Astrocyte of the cerebellum (primary cell): ENCODE measurements at regions of chr4 and their contacts with region 1.

Region 1: GRCh38 chr4:150297861-150298474 is 219.7 kb downstream of the DCLK2 start:
- DNase-seq: peak; percentile 70
- H3K4me3 ChIP-seq: no peak overlapping the region
- CTCF ChIP-seq: peak; percentile 62

Region 2: DNA sequence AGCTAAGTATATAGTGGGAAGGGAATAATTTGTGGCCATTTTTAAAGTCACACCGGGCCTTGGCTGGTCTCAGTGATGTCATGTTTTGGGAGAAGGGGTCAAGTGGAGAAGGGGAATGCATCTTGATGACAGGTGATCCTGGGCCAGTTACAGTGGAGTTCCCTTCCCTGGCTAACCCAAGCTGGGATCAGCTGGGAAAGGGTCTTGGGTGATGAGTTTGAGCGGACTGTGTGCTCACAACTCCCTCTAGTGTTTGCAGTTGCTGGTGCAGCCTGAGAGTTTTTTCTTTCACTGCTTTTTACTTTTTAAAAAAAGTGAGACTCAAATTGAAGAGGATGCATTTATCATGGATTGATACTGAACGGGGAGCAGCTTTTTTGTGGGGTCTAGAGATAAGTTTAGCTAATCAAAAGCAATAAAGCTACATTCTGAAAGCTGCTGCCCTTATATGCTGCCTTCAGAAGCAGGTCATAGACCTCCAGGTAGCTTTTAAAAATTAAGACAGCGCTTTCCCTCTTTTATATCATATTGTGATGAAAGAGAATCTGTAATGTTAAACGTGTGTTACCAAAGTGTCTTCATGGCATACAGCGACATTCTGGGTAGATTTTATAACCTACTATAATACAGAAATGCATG is 55.0 kb before region 1 on chr4:
- in situ Hi-C with region 1: no loop called
- DNase-seq: no peak
- H3K4me3 ChIP-seq: no peak overlapping the region
- CTCF ChIP-seq: peak; percentile 87

Region 3: DNA sequence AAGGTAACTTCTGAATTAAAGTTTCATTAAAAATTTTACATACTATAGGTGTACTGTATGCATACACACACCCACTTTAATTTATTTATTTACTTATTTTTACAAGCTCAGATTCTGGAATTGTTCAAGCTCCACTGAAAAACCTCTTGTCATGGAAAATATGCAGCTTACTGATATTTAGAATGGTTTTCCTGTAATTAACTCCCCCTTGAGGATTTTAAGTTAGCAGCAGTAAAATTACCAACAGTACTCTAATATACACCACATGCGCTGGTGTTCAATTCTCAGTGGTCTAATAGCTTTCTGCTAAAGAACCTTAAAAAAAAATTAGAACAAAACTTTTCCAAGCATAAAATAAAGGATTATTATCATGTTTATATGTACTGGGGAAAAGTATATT is 296.0 kb after region 1 on chr4:
- in situ Hi-C with region 1: loop called (anchors 25 kb)
- DNase-seq: no peak
- H3K4me3 ChIP-seq: no peak overlapping the region
- CTCF ChIP-seq: peak; percentile 19

Region 4: DNA sequence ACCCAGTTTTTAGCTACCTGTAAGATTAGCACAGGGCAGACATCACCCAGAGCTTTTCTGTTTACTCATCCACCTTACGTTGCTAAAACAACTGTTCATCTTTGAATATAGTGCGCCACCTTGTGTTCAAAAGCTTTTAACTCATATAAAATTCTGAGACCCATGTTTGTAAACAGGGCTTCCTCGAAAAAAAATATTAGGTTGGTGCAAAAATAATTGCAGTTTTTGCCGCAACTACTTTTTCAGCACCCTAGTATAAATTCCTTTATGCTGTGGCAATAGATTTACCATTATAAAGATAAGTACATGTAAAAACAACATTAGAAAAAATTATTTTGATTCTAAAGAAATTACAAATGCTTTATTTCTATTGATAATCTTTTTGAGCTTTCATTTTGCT is 569.2 kb after region 1 on chr4:
- in situ Hi-C with region 1: loop called (anchors 25 kb)
- DNase-seq: peak; percentile 77
- H3K4me3 ChIP-seq: no peak overlapping the region
- CTCF ChIP-seq: peak; percentile 28